ENCODE measurements at regions of chr17 and their contacts with region 1.

Region 1: DNA sequence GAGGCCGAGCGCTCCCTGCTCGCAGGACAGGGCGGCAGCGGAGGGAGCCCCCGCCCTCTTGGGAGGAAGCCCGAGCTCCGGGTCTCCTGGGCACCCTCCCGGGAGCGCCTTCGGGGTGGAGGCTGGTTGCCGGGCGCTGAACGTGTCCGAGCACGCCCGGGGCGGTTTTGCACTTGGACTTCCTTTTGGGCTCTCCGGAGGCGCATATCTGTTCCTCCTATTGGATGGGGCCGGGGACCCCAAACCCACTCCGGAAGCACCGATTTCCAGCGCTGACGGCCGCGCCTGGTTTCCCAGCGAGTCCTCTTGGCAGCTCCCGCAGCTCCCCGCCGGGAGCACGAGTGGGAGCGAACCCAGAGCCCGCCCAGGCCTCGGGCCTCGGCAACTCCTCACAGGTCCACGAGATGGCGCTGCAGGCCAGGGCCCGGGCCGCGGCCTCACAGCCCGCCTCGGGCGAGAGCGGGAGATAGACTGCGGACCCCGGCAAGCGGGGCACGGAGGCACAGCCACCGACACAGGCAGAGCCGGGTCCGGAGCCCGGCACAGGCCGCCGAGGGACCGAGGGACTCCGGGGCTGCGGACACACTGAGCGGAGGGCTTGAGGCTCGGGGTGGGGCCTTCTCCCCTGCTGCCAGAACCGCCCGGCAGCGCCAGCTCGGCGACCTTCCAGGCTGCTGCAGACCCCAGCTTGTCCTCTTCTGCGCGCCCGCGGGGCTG is 12.7 kb downstream of the TBX2 start:
- DNase-seq: peak; percentile 60 to 96 (median 80)
- ATAC-seq: peak; percentile 84 to 91 (median 88)
- H3K4me3 ChIP-seq: peak overlapping the region; percentile 51 to 63 (median 59)
- H3K27ac ChIP-seq: peak overlapping the region; percentile 4 to 57 (median 23)
- H3K4me1 ChIP-seq: peaks cover 0 to 18% (median 5%) of the 10 kb centered on the region in 3 donors
- H3K27me3 ChIP-seq: peaks cover 0 to 12% (median 3%) of the 10 kb centered on the region in 4 donors
- CTCF ChIP-seq: peak; percentile 97 to 99 (median 99)

Region 2: GRCh38 chr17:61545335-61545938 is 133.1 kb after region 1 on chr17:
- intact Hi-C with region 1: loop called in 2 of 3 experiments (anchors 5 to 10 kb)
- DNase-seq: no peak
- ATAC-seq: no peak
- H3K4me3 ChIP-seq: no peak overlapping the region
- H3K27ac ChIP-seq: no peak overlapping the region
- H3K4me1 ChIP-seq: no peaks in the 10 kb centered on the region
- H3K27me3 ChIP-seq: peaks cover 0 to 12% (median 8%) of the 10 kb centered on the region in 4 donors
- CTCF ChIP-seq: no peak

Region 3: DNA sequence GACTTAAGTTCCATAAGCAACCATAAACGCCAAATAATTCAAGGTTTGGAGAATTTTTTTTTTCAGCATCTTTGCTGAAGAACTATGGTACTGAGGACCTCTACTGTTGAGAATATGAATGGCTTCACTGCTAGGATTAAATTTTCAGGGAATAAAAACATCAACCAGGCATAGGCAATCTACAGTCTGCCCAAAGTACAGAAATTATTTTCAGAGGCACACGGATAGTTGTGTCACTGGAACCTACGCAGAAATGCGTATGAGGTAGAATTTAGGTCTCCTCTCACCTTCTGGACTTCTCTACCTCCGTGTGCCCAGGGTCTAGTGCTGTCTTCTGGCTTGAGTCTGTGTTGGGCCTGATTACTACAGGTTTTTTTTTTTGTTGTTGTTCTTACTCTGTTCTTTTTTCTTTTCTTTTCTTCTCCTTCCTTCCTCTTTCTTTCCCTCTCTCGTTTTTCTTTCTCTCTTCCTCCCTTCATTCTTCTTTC is 139.0 kb after region 1 on chr17:
- intact Hi-C with region 1: loop called in 2 of 3 experiments (anchors 5 to 10 kb)
- DNase-seq: no peak
- ATAC-seq: peak in 3 of 4 donors; percentile 59 to 70 (median 67)
- H3K4me3 ChIP-seq: no peak overlapping the region
- H3K27ac ChIP-seq: no peak overlapping the region
- H3K4me1 ChIP-seq: no peaks in the 10 kb centered on the region
- H3K27me3 ChIP-seq: peaks cover 0 to 12% (median 8%) of the 10 kb centered on the region in 4 donors
- CTCF ChIP-seq: peak in 3 of 4 donors; percentile 40 to 58 (median 42)

Region 4: DNA sequence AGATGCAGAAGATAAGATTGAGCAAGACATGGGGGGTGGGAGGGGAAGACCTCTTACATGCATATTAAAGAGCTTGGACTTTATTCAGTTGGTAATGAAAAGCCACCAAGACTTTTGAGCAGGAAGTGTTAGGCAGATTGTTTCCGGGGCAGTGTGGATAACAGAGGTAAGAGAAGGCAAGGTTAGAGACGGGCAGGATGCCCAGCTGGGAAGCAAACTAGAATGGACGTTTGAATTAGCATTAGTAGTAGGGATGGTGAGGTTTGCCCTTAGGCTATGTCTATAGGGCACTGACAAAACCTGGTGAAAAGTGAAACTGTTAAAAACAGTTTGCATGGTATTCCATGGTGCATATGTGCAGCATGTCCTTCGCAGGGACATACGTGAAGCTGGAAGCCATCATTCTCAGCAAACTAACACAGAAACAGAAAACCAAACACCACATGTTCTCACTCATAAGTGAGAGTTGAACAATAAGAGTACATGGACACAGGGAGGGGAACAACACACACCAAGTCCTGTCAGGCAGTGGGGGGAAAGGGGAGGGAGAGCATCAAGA is 152.8 kb after region 1 on chr17:
- intact Hi-C with region 1: no loop called
- DNase-seq: no peak
- ATAC-seq: no peak
- H3K4me3 ChIP-seq: no peak overlapping the region
- H3K27ac ChIP-seq: no peak overlapping the region
- H3K4me1 ChIP-seq: no peaks in the 10 kb centered on the region
- H3K27me3 ChIP-seq: no peaks in the 10 kb centered on the region
- CTCF ChIP-seq: no peak

Region 5: DNA sequence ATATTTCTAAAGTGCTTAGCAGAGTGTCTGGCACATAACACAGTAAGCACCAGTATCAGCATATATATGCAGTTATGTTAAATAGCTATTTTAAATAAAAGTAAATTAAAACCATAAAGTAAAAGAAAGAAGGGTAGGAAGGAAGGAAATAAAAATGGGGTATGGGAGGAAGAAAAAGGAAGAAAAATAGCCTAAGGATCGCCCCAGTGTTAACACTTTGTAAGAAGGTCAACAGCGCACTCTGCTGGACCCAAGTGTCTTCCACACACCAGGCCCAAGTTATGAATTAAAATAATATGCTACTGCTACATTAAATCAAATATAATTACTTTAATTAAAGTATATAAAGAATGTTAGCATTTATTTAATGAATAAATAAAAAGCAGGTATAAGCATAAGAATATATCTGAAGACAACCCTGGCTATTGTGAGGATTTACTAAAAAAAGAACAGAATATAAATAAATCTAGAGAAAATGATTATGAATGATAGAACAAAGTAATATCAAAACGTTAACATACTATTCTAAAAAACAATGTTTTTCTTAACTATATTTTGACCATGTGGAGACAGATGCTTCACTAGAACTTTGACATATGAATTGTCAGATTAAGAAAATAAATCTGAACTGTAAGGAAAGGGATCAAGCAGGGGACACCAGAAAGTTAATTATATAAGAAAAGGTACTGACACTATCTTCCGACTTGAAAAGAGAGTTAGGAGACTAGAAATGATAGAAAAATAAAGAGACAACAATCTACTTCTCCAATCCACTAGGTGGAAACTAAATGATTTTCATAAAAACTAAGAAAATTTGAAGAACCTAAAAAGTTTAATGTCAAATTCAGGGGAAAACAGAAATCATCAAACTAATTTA is 425.1 kb after region 1 on chr17:
- intact Hi-C with region 1: loop called in 1 of 3 experiments (anchors 10 kb)
- DNase-seq: peak in 5 of 6 donors; percentile 16 to 64 (median 44)
- ATAC-seq: peak; percentile 67 to 84 (median 80)
- H3K4me3 ChIP-seq: no peak overlapping the region
- H3K27ac ChIP-seq: no peak overlapping the region
- H3K4me1 ChIP-seq: no peaks in the 10 kb centered on the region
- H3K27me3 ChIP-seq: no peaks in the 10 kb centered on the region
- CTCF ChIP-seq: peak; percentile 28 to 56 (median 52)

Measured in pancreas (tissue), 10 donors.